H1 (cell line): ENCODE measurements at regions of chr4 and their contacts with region 1.

Region 1: DNA sequence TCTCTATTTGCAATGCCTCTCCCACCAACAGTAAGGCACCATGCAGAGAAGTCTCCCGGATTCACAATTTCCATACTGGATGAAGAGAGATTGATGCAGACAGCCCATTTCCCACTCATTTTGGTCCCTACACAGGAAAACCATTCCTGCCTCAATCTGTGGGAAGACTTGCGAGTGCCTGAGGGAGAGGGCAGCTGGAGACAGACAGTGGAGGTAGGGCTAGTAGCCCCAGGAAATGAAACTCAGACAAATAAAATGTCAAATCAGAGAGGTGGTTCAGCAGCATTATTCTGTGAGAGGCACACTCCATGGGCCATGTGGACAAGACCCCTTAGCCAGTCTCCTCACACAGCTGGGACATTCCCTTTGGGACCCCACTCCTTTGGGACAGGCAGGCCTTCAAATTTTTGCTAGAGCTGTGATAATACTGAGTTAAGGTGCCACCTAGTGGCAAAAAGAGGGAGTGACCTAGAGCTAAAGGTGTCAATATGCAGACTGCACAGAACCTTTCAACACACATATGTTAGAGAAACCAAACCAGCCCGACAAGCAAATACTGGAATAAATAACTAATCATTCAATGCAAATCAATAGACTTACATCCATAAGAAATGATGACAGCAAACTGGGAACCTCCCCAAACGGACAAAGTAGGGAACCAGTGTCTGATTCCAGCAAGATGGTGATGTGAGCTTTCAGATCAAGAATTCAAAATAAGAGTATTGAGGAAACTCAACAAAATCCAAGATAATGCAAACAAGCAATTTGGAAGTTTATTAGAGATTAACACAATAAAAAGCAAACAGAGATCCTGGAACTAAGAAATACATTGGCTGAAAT is 1865.3 kb upstream of the AGA start:
- DNase-seq: peak in 1 of 2 experiments; percentile 85
- H3K4me3 ChIP-seq: no peak overlapping the region
- H3K27ac ChIP-seq: no peak overlapping the region
- H3K4me1 ChIP-seq: peaks cover 0 to 4% (median 0%) of the 10 kb centered on the region in 4 experiments; a peak in 2 of 7 replicates
- H3K27me3 ChIP-seq: no peaks in the 10 kb centered on the region
- CTCF ChIP-seq: peak in 2 of 3 experiments; percentile 64 to 84; a peak in 3 of 4 replicates
- EP300 ChIP-seq: no peak
- POLR2A ChIP-seq: no peak
- RAD21 ChIP-seq: peak; percentile 88 to 93

Region 2: GRCh38 chr4:179007755-179008154 is 299.8 kb before region 1 on chr4:
- CTCF ChIA-PET with region 1: interaction called, 13 read pairs
- POLR2A ChIA-PET with region 1: no interaction called
- DNase-seq: no peak
- H3K4me3 ChIP-seq: no peak overlapping the region
- H3K27ac ChIP-seq: no peak overlapping the region
- H3K4me1 ChIP-seq: no peaks in the 10 kb centered on the region
- H3K27me3 ChIP-seq: no peaks in the 10 kb centered on the region
- CTCF ChIP-seq: peak in 2 of 3 experiments; percentile 18 to 33; a peak in 2 of 4 replicates
- EP300 ChIP-seq: no peak
- POLR2A ChIP-seq: no peak
- RAD21 ChIP-seq: peak; percentile 59 to 68

Region 3: DNA sequence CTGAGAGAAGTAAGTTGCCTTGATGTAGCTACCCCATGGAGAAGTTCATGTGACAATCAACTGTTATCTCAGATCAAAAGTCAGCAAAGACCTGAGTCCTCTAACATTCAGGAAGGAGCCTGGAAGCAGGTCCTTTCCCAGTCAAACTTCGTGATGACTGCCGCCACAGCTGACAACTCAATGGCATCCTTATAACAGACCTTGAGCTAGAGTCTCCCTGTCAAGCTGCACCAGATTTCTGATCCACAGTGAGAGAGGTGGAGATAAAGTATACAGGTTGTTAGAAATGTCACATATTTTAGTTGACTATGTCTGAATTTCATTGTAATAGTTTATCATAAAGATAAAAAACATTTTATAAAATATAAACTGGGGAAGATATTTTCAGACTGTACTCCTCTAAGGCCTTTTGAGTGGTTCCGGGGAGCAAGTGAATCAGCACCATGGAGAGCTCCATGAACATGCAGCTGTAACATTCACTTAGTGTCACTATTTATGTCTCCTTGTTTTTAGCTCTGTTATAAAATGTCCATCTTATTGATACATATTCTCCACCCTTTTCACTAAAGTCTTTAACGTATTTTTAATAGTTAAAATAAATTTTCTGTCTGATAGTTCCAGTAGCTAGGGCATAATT is 211.8 kb before region 1 on chr4:
- CTCF ChIA-PET with region 1: no interaction called
- POLR2A ChIA-PET with region 1: no interaction called
- DNase-seq: peak in 1 of 2 experiments; percentile 63
- H3K4me3 ChIP-seq: no peak overlapping the region
- H3K27ac ChIP-seq: no peak overlapping the region
- H3K4me1 ChIP-seq: no peaks in the 10 kb centered on the region
- H3K27me3 ChIP-seq: no peaks in the 10 kb centered on the region
- CTCF ChIP-seq: no peak
- EP300 ChIP-seq: no peak
- POLR2A ChIP-seq: no peak
- RAD21 ChIP-seq: no peak

Region 4: DNA sequence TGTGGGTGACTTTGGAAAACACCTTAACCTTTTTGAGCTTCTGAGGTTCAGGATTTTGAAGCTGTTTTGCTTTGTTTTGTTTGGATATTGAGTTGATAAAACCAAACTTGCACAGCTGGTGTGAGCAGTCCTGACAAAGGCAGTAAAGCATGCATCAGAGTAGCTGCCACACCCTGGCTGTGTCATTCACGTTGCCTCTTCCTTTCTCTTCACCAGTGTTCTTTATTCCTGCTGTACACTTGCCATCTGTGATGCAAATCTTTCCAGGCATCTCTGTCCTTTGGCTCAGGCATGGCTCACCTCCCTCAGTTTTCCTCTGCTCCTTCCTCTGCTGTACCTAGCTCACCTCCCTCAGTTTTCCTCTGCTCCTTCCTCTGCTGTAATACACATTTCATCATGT is 15.0 kb before region 1 on chr4:
- CTCF ChIA-PET with region 1: interaction called, 11 read pairs
- POLR2A ChIA-PET with region 1: no interaction called
- DNase-seq: no peak
- H3K4me3 ChIP-seq: no peak overlapping the region
- H3K27ac ChIP-seq: no peak overlapping the region
- H3K4me1 ChIP-seq: peaks cover 2 to 13% (median 7%) of the 10 kb centered on the region in 4 experiments; a peak in 6 of 7 replicates
- H3K27me3 ChIP-seq: no peaks in the 10 kb centered on the region
- CTCF ChIP-seq: no peak
- EP300 ChIP-seq: no peak
- POLR2A ChIP-seq: no peak
- RAD21 ChIP-seq: no peak

Region 5: GRCh38 chr4:179392787-179393186 is 85.3 kb after region 1 on chr4:
- CTCF ChIA-PET with region 1: no interaction called
- POLR2A ChIA-PET with region 1: no interaction called
- DNase-seq: no peak
- H3K4me3 ChIP-seq: no peak overlapping the region
- H3K27ac ChIP-seq: no peak overlapping the region
- H3K4me1 ChIP-seq: no peaks in the 10 kb centered on the region
- H3K27me3 ChIP-seq: no peaks in the 10 kb centered on the region
- CTCF ChIP-seq: no peak
- EP300 ChIP-seq: no peak
- POLR2A ChIP-seq: no peak
- RAD21 ChIP-seq: no peak